Esophagus muscularis mucosa (tissue), 4 donors: ENCODE measurements at regions of chr6 and their contacts with region 1.

Region 1: DNA sequence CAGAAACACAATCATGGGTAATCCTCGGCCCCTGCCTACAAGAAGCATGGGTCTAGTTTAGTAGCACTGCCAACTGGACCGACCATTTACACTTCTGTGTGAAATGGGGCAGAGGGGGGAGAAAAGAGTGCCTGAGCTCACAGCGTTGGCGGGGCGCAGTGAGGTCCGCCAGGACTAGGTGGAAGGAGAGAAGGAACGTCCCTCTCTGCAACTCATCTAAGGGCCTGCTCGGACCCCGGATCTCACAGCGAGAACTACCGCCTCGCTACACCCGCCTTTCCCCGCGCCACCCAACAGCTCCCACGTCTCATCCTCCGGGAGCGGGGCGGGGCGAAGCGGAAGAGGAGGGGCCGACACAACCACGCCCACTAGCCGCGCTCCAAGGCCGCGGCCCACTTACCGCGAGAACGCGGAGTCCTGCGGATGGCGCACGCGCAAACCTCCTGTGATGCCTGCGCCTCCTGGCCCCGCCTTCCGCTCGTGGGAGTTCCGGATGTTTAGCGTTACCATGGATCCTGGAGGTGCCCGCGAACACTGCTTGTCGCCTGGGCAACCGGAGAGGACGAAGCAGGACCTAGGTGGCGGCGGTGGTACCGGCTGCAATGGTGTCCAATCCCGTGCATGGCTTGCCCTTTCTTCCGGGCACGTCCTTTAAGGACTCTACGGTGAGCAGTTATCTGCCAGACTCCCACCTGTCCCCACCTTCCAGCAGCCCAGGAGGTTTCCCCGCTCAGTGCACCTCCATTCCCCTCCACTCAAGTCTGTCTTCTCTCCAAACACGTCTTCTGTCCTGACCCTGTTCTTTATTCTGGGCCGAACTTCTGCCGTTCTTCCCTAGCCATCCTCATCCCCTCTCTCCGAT is at the start of gene EFHC1:
- DNase-seq: peak; percentile 99
- H3K4me3 ChIP-seq: peak within 1 kb of the TSS; percentile 81 to 90 (median 81)
- H3K27ac ChIP-seq: peak within 1 kb of the TSS; percentile 83 to 89 (median 87)
- H3K4me1 ChIP-seq: peaks cover 22 to 36% (median 28%) of the 10 kb centered on the region in 4 donors
- H3K27me3 ChIP-seq: peaks cover 0 to 4% (median 0%) of the 10 kb centered on the region in 4 donors
- CTCF ChIP-seq: peak in 1 of 3 experiments; percentile 23
- EP300 ChIP-seq: no peak
- POLR2A ChIP-seq: peak; percentile 52
- total RNA-seq, gene EFHC1: 7.5 to 21.2 (median 10.2) TPM

Region 2: DNA sequence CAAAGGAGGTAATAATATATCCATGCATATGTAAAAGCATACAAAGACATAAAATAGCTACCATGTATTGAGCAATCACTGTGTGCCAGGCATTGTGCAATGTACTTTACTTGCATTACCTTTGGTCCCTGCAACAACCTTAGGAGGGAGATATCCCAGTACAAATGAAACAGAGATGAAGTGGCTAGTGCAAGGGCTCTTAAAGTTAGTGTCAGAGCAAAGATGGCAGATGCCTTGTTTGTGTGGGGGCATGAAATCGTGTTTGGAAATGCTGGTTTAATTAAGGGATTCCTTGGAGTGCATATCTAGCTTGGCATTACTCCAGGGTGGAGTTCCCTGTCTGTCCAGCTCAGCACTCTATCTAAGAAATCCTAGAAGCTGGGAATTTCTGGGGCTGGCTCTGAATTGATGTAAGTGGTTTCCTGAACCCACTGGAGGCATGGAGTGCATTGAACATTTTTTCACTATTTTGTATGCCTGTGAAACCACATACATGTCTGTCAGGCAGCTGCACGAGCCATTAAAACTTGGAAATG is 48.3 kb before region 1 on chr6:
- intact Hi-C with region 1: no loop called
- DNase-seq: no peak
- H3K4me3 ChIP-seq: no peak overlapping the region
- H3K27ac ChIP-seq: no peak overlapping the region
- H3K4me1 ChIP-seq: peaks cover 3 to 22% (median 8%) of the 10 kb centered on the region in 4 donors
- H3K27me3 ChIP-seq: no peaks in the 10 kb centered on the region
- CTCF ChIP-seq: no peak
- EP300 ChIP-seq: no peak
- POLR2A ChIP-seq: no peak

Region 3: DNA sequence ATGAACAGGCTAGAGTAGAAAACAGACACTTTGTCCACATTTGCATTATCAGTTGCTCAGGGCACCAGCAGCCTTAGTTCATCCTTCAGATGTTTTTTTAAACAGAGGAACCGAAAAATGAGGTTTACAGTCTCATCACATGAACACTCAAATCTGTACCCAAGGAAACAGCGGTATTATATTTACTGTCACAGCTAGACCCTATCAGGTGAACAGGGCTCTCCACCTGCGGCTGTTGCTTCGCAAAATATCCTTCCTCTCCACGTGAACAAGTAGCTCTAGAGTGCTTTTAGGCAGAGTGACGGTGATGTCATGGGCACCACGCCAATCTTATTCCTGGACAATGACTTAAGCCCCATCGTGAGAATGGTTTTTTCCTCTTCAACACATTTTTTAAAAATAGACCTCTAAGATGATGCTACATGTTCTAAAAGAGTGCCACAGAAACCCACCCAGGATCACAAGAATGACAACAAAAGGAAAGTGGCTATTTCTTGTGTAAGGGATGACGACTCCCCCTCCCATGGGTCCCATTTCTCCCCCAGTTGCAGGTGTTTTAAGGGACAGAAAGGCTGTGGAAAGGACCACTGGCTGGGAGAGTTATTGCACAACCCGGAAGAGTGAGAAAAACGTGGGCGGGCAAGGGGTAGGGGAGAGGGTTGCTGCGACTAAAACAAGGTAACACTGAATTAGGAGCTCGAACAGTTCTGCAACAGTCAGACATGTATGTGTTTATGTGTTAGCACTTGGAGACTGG is 77.8 kb after region 1 on chr6:
- intact Hi-C with region 1: loop called (anchors 5 kb)
- DNase-seq: no peak
- H3K4me3 ChIP-seq: no peak overlapping the region
- H3K27ac ChIP-seq: peak overlapping the region in 2 of 4 donors; percentile 16 to 48
- H3K4me1 ChIP-seq: peaks cover 29 to 34% (median 32%) of the 10 kb centered on the region in 4 donors
- H3K27me3 ChIP-seq: no peaks in the 10 kb centered on the region
- CTCF ChIP-seq: no peak
- EP300 ChIP-seq: no peak
- POLR2A ChIP-seq: no peak

Region 4: GRCh38 chr6:52517502-52518278 is 97.7 kb after region 1 on chr6:
- intact Hi-C with region 1: loop called (anchors 5 kb)
- DNase-seq: peak; percentile 95
- H3K4me3 ChIP-seq: peak overlapping the region in 3 of 4 donors; percentile 6 to 16 (median 15)
- H3K27ac ChIP-seq: peak overlapping the region; percentile 79 to 89 (median 86)
- H3K4me1 ChIP-seq: peaks cover 60 to 96% (median 94%) of the 10 kb centered on the region in 4 donors
- H3K27me3 ChIP-seq: no peaks in the 10 kb centered on the region
- CTCF ChIP-seq: no peak
- EP300 ChIP-seq: no peak
- POLR2A ChIP-seq: no peak

Region 5: DNA sequence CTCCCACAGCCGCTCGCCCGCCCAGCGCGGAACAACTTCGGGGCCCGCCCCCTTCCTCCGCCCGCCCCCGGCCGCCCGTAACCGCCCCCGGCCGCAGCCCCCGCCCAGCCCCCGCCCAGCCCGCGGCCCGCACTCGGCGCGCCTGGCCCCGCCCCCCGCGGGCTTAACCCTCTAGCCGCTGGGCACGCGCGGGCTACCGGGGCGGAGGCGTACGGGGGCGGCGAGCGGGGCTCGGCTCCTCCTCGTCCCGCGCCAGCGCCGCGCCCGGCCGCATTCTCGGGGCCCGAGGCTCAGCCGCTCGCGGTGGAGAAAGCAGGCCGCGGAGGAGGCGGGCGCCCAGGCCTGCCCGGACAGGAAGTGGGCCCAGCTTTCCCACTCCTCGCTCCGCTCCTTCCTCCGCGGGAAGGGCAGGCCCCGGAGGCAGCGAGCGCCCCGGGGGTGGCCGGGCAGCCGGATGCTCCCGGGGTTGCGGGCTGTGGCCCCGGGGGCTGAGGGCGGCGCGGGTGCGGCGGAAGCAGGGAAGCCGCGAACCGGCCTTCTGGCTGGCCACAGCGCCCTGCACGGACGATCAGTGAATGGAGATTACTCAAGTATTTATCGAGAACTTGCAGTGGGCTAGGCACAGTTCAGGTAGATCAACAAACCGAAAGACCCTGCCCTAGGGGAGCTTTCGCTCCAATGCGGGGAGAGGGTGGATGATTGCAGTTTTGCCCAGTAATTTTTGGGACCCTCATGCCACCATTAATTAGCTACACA is 157.2 kb after region 1 on chr6 and contains the start of gene TRAM2:
- intact Hi-C with region 1: loop called (anchors 1 kb)
- DNase-seq: peak; percentile 95
- H3K4me3 ChIP-seq: peak within 1 kb of the TSS; percentile 88 to 92 (median 90)
- H3K27ac ChIP-seq: peak within 1 kb of the TSS; percentile 98 to 100 (median 99)
- H3K4me1 ChIP-seq: peaks cover 47 to 60% (median 54%) of the 10 kb centered on the region in 4 donors
- H3K27me3 ChIP-seq: no peaks in the 10 kb centered on the region
- CTCF ChIP-seq: peak in 2 of 3 experiments; percentile 7 to 32
- EP300 ChIP-seq: no peak
- POLR2A ChIP-seq: peak; percentile 49
- total RNA-seq, gene TRAM2: 13.3 to 23.8 (median 18.5) TPM

Region 6: GRCh38 chr6:52598123-52598823 is 178.2 kb after region 1 on chr6:
- intact Hi-C with region 1: loop called (anchors 1 kb)
- DNase-seq: no peak
- H3K4me3 ChIP-seq: peak overlapping the region; percentile 21 to 46 (median 32)
- H3K27ac ChIP-seq: peak overlapping the region; percentile 15 to 53 (median 37)
- H3K4me1 ChIP-seq: peaks cover 30 to 44% (median 38%) of the 10 kb centered on the region in 4 donors
- H3K27me3 ChIP-seq: no peaks in the 10 kb centered on the region
- CTCF ChIP-seq: peak; percentile 67 to 77 (median 68)
- EP300 ChIP-seq: no peak
- POLR2A ChIP-seq: no peak

Region 7: DNA sequence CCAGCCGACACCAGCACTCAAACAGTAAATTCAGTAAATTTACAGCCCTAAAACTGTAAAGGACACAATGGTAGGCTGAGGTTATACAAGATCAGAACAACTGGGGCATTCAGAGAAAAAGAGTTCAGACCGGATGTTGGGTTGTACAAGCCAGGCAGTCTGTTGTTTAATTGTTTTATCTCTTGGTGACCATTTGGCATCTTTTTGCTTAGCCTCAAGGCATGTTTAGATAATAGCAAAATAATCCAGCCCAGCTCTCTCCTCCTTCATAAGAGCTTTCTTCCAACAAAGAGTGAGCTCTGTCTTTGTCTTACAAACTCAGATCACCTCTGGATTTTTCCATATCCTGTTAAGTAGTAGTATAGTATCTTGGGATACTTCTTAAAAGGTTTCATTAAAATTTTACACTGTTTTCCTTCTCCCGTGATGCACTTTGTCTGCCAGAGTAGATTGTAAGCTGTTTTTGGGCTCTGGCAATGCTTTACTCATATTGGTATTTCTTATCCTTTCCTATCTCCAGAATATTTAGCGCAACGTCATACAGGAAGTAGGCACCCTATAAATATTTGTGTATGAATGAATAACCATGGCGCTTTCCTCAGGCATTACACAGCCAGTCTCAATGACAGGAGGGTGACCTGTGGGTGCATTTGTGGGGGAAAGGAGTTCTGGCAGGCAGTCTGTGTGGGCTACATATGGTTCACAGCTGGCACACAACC is 192.5 kb after region 1 on chr6:
- intact Hi-C with region 1: no loop called
- DNase-seq: no peak
- H3K4me3 ChIP-seq: no peak overlapping the region
- H3K27ac ChIP-seq: no peak overlapping the region
- H3K4me1 ChIP-seq: peaks cover 0 to 6% (median 0%) of the 10 kb centered on the region in 4 donors
- H3K27me3 ChIP-seq: no peaks in the 10 kb centered on the region
- CTCF ChIP-seq: no peak
- EP300 ChIP-seq: no peak
- POLR2A ChIP-seq: no peak

Region 8: DNA sequence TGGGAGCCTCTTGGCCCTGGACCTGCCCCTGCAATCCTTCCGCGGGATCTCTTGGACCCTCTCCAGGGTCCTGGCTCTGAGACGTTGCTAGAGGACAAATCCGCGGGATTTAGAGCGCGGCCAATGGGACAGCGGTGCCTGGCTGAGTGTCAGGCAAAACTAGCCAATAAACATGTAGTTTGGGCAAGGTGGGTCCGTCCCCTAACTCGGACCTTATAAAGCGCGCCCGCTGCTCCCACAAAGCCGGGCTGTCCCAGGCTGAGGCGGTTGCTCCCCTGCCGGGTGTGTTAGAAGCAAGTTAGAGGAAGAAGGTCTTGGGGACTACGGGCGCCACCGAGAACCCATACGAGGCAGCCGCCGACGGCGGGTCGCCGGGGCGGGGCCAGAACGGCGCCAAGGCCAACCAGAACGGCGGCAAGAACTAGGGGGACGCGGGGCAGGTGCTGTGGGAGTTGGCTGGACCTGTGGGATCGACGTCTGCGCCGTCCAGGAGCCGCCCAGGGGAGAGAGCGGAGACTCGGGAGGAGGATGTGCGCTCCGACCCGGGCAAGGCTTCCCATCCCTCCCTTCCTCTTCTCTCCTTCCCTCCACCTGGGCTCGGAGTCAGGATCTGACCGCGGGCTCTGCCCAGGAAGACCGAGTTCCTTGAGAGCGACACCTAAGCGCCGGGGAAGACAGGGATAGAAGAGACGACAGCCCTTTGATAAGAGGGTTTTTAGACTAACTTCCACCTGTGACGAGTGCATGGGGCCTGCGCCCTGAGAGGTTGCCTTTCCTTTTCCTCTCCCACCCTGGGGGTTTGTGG is 244.3 kb after region 1 on chr6:
- intact Hi-C with region 1: loop called (anchors 1 kb)
- DNase-seq: peak; percentile 96
- H3K4me3 ChIP-seq: peak overlapping the region; percentile 57 to 86 (median 76)
- H3K27ac ChIP-seq: peak overlapping the region; percentile 63 to 86 (median 80)
- H3K4me1 ChIP-seq: peaks cover 16 to 20% (median 16%) of the 10 kb centered on the region in 4 donors
- H3K27me3 ChIP-seq: no peaks in the 10 kb centered on the region
- CTCF ChIP-seq: no peak
- EP300 ChIP-seq: no peak
- POLR2A ChIP-seq: peak; percentile 27